Prostate gland (tissue), 2 donors: ENCODE measurements at regions of chr3 and their contacts with region 1.

Region 1: GRCh38 chr3:150183678-150184425 is 213.2 kb upstream of the PFN2 start:
- DNase-seq: peak; percentile 60
- H3K4me3 ChIP-seq: peak overlapping the region in 1 of 2 donors; percentile 20
- H3K27ac ChIP-seq: peak overlapping the region in 1 of 2 donors; percentile 18
- H3K4me1 ChIP-seq: no peaks in the 10 kb centered on the region
- H3K27me3 ChIP-seq: no peaks in the 10 kb centered on the region
- CTCF ChIP-seq: peak in 3 of 4 experiments; percentile 59 to 68 (median 64)
- POLR2A ChIP-seq: no peak

Region 2: DNA sequence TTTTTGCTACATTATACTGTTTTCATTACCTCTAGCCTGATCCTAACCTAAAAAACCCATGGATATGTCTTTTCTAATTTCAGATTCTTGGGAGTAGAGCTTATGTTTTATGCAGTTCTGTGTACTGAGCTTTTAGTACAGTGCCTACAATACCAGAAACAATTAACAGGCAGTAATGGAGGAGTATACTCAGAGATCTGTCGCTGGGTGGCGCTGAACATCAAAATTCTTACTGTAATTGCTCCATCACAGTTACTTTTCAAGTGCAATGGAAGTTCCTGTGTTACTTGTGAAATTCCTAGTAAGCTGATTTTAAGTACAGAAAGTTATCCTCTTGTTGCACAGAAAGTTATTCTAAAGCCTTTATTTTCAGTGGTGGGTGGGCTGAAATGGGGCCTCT is 304.0 kb before region 1 on chr3:
- intact Hi-C with region 1: loop called (anchors 10 kb)
- DNase-seq: no peak
- H3K4me3 ChIP-seq: no peak overlapping the region
- H3K27ac ChIP-seq: no peak overlapping the region
- H3K4me1 ChIP-seq: no peaks in the 10 kb centered on the region
- H3K27me3 ChIP-seq: no peaks in the 10 kb centered on the region
- CTCF ChIP-seq: peak in 3 of 4 experiments; percentile 17 to 47 (median 25)
- POLR2A ChIP-seq: no peak